ENCODE measurements at regions of chr17 and their contacts with region 1.

Region 1: DNA sequence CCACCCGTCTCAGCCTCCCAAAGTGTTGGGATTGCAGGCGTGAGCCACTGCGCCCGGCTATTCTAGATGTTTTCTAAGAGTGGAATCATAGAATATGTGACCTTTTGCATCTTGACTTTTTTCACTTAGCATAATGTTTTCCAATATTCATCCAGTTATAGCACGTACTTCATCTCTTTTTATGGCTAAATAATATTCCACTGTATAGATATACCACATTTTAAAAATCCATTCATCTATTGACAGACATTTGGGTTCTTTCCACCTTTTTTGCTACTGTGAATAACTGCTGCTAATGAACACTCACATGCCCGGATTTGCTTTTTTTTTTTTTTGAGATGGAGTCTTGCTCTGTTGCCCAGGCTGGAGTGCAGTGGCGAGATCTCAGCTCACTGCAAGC is 3.2 kb upstream of the EIF5A start:
- DNase-seq: no peak
- H3K4me3 ChIP-seq: no peak overlapping the region
- H3K27ac ChIP-seq: no peak overlapping the region
- H3K4me1 ChIP-seq: peaks cover 3% of the 10 kb centered on the region in 2 donors
- H3K27me3 ChIP-seq: no peaks in the 10 kb centered on the region
- CTCF ChIP-seq: no peak
- POLR2A ChIP-seq: no peak

Region 2: DNA sequence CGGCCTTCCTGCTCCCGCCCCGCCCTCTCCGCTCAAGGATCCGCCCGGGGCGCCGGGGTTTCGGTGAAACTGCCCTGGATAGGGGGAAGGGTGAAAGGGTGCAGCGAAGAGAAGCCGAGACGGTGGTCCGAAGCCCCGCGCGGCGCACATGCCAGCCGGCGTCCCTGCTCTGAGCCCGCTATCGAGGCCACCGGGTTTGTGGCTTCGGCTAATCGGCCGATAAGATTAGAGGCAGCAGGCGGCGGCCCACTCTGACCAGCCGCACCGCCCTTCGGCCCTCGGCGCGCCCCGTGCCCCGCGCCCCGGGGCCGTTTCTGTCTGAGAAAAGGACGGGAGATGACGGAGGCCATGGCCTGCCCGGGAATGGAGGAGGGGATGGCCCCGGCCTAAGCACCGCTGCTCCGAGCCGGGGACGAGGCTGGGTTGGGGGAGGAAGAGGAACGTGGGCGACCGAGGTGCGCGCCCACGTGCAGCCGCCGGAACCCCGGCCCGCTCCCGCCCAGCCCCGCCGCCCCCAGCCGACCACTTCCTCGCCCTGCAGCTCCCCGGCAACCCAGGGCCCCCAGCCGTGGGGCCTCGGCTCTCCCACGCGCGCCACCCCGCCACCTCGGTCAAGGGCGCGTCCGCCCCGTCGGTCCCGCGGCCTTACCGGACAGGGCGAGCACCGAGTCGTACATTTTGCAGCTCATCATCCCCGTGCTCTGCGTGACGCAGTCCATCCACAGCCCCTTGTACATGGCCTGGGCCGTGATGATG is 42.8 kb before region 1 on chr17:
- intact Hi-C with region 1: loop called in 1 of 2 experiments (anchors 5 kb)
- DNase-seq: peak in 3 of 7 donors; percentile 56 to 64 (median 61)
- H3K4me3 ChIP-seq: peak overlapping the region in 2 of 4 donors; percentile 14 to 61
- H3K27ac ChIP-seq: peak overlapping the region in 2 of 5 donors; percentile 19 to 81
- H3K4me1 ChIP-seq: peaks cover 12 to 21% of the 10 kb centered on the region in 2 donors
- H3K27me3 ChIP-seq: no peaks in the 10 kb centered on the region
- CTCF ChIP-seq: no peak
- POLR2A ChIP-seq: no peak